ENCODE measurements at regions of chr6 and their contacts with region 1.

Region 1: GRCh38 chr6:52881996-52882841 is 27.3 kb downstream of the GSTA3 start:
- DNase-seq: no peak

Region 2: GRCh38 chr6:52985228-52985627 is 103.0 kb after region 1 on chr6:
- intact Hi-C with region 1: loop called (anchors 5 kb)
- DNase-seq: no peak

Region 3: GRCh38 chr6:53064726-53065215 is 182.6 kb after region 1 on chr6:
- intact Hi-C with region 1: loop called (anchors 5 kb)
- DNase-seq: peak; percentile 99

Measured in cardiac septum (tissue), 1 donor.